Naive thymus-derived CD4-positive, alpha-beta T cell (primary cell): ENCODE measurements at regions of chr16 and their contacts with region 1.

Region 1: DNA sequence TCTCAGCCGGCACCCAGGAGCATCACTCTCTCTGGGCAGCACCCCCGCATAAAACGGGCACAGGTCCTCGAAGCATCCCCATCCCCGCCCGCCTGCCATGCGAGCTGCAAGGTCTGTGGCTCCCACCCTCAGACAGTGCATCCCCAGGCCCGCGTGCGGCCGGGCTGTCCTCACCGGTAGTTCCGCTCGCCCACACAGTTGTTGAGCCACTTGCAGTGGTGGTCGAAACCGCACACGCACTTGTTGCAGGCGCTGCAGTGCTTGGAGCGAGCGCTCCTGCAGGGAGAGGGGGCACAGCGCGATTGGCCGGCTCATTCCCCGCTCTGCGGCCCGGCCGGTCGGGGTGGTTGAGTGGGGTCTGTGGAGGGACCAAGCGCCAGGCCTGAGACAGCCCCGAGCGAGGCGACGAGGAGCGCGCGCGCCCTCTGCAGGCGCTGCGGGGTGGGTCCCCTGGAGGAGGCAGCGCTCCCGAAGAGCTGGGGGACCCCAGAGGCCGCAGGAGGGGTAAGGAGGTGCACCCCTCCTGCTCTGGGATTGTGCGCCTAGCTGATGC is 6.0 kb upstream of the TPPP3 start:
- DNase-seq: peak in 6 of 9 donors; percentile 29 to 69 (median 46)
- ATAC-seq: peak; percentile 77
- H3K4me3 ChIP-seq: no peak overlapping the region
- H3K4me3 Mint-ChIP-seq: no peak overlapping the region
- H3K27ac ChIP-seq: no peak overlapping the region
- H3K27ac Mint-ChIP-seq: no peak overlapping the region
- H3K4me1 ChIP-seq: no peaks in the 10 kb centered on the region
- H3K4me1 Mint-ChIP-seq: peaks cover under 1 to 3% (median under 1%) of the 10 kb centered on the region in 7 donors
- H3K27me3 ChIP-seq: peaks cover 0 to 1% of the 10 kb centered on the region in 2 donors
- H3K27me3 Mint-ChIP-seq: peaks cover 6 to 26% (median 19%) of the 10 kb centered on the region in 5 donors

Region 2: GRCh38 chr16:66954097-66954659 is 445.1 kb before region 1 on chr16:
- CTCF ChIA-PET with region 1: no interaction called
- POLR2A ChIA-PET with region 1: no interaction called
- intact Hi-C with region 1: loop called in 1 of 2 experiments (anchors 1 kb)
- DNase-seq: peak; percentile 46 to 78 (median 67)
- ATAC-seq: peak; percentile 86
- H3K4me3 ChIP-seq: no peak overlapping the region
- H3K4me3 Mint-ChIP-seq: peak overlapping the region in 1 of 10 donors; percentile 5
- H3K27ac ChIP-seq: no peak overlapping the region
- H3K27ac Mint-ChIP-seq: peak overlapping the region in 1 of 9 donors; percentile 4
- H3K4me1 ChIP-seq: no peaks in the 10 kb centered on the region
- H3K4me1 Mint-ChIP-seq: peaks cover 11 to 27% (median 15%) of the 10 kb centered on the region in 7 donors
- H3K27me3 ChIP-seq: no peaks in the 10 kb centered on the region
- H3K27me3 Mint-ChIP-seq: peaks cover 31 to 40% (median 35%) of the 10 kb centered on the region in 5 donors

Region 3: GRCh38 chr16:67260426-67261075 is 138.7 kb before region 1 on chr16:
- CTCF ChIA-PET with region 1: no interaction called
- POLR2A ChIA-PET with region 1: no interaction called
- intact Hi-C with region 1: loop called in 1 of 2 experiments (anchors 2 kb)
- DNase-seq: no peak
- ATAC-seq: peak; percentile 60
- H3K4me3 ChIP-seq: no peak overlapping the region
- H3K4me3 Mint-ChIP-seq: no peak overlapping the region
- H3K27ac ChIP-seq: no peak overlapping the region
- H3K27ac Mint-ChIP-seq: no peak overlapping the region
- H3K4me1 ChIP-seq: no peaks in the 10 kb centered on the region
- H3K4me1 Mint-ChIP-seq: peaks cover 0 to 5% (median 0%) of the 10 kb centered on the region in 7 donors
- H3K27me3 ChIP-seq: no peaks in the 10 kb centered on the region
- H3K27me3 Mint-ChIP-seq: peaks cover 0 to 41% (median 22%) of the 10 kb centered on the region in 5 donors

Region 4: DNA sequence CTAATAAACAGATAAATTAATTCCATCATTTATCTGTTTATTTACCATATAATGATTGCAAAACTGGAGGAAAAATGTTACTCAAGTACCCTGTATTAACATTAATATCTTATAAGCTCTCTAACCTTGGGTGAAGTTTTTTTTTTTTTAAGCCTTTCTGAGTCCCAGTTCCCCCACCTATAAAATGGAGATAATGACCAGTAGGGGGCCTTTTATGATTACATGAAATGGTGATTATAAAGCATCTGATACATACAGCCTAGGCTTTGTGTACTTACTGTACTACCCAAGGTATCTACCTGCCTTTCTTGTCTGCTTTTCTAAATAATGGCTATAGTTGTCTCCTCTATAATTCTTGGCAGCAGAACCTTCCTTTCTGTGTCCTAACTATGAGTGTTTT is 50.1 kb before region 1 on chr16:
- CTCF ChIA-PET with region 1: interaction called, 4 read pairs
- POLR2A ChIA-PET with region 1: no interaction called
- intact Hi-C with region 1: loop called in 1 of 2 experiments (anchors 2 kb)
- DNase-seq: peak in 4 of 9 donors; percentile 19 to 43 (median 31)
- ATAC-seq: no peak
- H3K4me3 ChIP-seq: no peak overlapping the region
- H3K4me3 Mint-ChIP-seq: no peak overlapping the region
- H3K27ac ChIP-seq: no peak overlapping the region
- H3K27ac Mint-ChIP-seq: peak overlapping the region in 1 of 9 donors; percentile 6
- H3K4me1 ChIP-seq: no peaks in the 10 kb centered on the region
- H3K4me1 Mint-ChIP-seq: no peaks in the 10 kb centered on the region
- H3K27me3 ChIP-seq: no peaks in the 10 kb centered on the region
- H3K27me3 Mint-ChIP-seq: peaks cover 0 to 13% (median 4%) of the 10 kb centered on the region in 5 donors